ENCODE measurements at regions of chr1 and their contacts with region 1.

Region 1: GRCh38 chr1:115946116-115946515 is 30.2 kb upstream of the SLC22A15 start:
- DNase-seq: no peak
- CTCF ChIP-seq: no peak

Region 2: DNA sequence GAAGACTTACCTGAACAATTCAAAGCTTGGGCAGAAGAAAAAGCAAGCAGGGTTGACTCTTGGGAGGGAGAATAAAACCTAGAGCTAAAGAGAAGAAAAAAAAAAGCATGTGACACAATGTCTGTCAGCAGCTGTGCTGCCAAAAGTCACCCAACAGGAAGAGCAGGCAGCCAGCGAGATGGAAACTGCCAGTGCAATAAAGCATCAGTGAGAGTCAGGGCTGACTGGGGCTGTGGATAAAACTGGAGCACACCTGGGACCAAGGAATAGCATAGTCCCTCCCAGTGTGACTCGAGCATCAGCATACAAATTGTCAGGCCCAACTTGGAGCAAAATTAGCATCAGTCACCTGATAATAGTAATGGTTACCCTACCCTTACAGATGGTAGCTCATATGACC is 34.8 kb before region 1 on chr1:
- CTCF ChIA-PET with region 1: no interaction called
- POLR2A ChIA-PET with region 1: no interaction called
- DNase-seq: no peak
- CTCF ChIP-seq: no peak

Region 3: GRCh38 chr1:115933625-115934024 is 12.5 kb before region 1 on chr1:
- CTCF ChIA-PET with region 1: interaction called, 11 read pairs
- POLR2A ChIA-PET with region 1: no interaction called
- DNase-seq: no peak
- CTCF ChIP-seq: no peak